ENCODE measurements at regions of chr9 and their contacts with region 1.

Region 1: GRCh38 chr9:98074115-98074990 is 17.8 kb downstream of the NANS start:
- DNase-seq: peak; percentile 48 to 82 (median 65)
- ATAC-seq: no peak
- H3K4me3 ChIP-seq: no peak overlapping the region
- H3K4me3 Mint-ChIP-seq: peak overlapping the region; percentile 69
- H3K27ac ChIP-seq: peak overlapping the region; percentile 73 to 83
- H3K27ac Mint-ChIP-seq: peak overlapping the region; percentile 94
- H3K4me1 ChIP-seq: peaks cover 28% of the 10 kb centered on the region
- H3K4me1 Mint-ChIP-seq: peaks cover 51% of the 10 kb centered on the region
- H3K27me3 ChIP-seq: no peaks in the 10 kb centered on the region
- H3K27me3 Mint-ChIP-seq: no peaks in the 10 kb centered on the region
- CTCF ChIP-seq: peak; percentile 99

Region 2: DNA sequence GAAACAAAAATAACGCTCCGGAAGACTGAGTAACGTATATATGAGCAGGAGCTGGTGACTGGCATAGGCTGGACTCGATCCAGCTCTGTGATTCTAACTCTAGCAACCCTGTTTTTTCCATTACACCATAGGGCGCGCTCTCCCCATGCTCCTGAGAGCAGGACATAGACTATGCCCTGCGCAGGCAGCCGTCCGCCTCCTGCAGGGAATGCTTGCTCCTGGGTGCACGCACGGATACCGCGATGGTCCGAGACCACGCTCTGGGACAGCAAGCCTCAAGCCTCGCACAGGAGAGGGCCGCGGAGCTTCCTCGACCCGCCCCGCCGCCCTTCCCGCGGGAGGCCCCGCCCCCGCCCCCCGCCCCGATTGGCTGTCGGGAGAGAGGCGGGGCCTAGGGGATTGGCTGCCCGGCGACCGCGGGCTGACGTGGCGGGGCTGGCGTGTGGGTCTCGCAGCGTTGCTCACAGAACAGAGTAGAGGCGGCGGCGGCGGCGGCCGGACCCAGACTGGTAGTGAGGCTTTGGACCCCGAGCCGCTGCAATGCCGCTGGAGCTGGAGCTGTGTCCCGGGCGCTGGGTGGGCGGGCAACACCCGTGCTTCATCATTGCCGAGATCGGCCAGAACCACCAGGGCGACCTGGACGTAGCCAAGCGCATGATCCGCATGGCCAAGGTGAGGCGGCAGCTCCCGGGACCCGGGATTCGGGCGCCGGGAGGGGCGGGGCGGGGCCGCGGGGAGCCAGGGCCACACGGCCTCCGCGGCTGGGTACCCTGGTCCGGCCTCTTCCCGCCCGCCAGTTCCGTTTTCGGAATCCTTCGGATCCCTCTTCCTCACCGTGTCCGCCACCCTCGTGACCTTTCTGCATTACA is 17.9 kb before region 1 on chr9 and contains the start of gene NANS:
- CTCF ChIA-PET with region 1: interaction called, 7 read pairs
- POLR2A ChIA-PET with region 1: interaction called, 6 read pairs
- intact Hi-C with region 1: loop called in 1 of 2 experiments (anchors 1 kb)
- DNase-seq: peak; percentile 81 to 95 (median 88)
- ATAC-seq: peak; percentile 92
- H3K4me3 ChIP-seq: peak within 1 kb of the TSS; percentile 71
- H3K4me3 Mint-ChIP-seq: peak within 1 kb of the TSS; percentile 98
- H3K27ac ChIP-seq: peak within 1 kb of the TSS; percentile 64 to 75
- H3K27ac Mint-ChIP-seq: peak within 1 kb of the TSS; percentile 93
- H3K4me1 ChIP-seq: peaks cover 27% of the 10 kb centered on the region
- H3K4me1 Mint-ChIP-seq: peaks cover 28% of the 10 kb centered on the region
- H3K27me3 ChIP-seq: no peaks in the 10 kb centered on the region
- H3K27me3 Mint-ChIP-seq: no peaks in the 10 kb centered on the region
- CTCF ChIP-seq: no peak
- total RNA-seq, gene NANS: 70.5 to 74.0 TPM

Region 3: DNA sequence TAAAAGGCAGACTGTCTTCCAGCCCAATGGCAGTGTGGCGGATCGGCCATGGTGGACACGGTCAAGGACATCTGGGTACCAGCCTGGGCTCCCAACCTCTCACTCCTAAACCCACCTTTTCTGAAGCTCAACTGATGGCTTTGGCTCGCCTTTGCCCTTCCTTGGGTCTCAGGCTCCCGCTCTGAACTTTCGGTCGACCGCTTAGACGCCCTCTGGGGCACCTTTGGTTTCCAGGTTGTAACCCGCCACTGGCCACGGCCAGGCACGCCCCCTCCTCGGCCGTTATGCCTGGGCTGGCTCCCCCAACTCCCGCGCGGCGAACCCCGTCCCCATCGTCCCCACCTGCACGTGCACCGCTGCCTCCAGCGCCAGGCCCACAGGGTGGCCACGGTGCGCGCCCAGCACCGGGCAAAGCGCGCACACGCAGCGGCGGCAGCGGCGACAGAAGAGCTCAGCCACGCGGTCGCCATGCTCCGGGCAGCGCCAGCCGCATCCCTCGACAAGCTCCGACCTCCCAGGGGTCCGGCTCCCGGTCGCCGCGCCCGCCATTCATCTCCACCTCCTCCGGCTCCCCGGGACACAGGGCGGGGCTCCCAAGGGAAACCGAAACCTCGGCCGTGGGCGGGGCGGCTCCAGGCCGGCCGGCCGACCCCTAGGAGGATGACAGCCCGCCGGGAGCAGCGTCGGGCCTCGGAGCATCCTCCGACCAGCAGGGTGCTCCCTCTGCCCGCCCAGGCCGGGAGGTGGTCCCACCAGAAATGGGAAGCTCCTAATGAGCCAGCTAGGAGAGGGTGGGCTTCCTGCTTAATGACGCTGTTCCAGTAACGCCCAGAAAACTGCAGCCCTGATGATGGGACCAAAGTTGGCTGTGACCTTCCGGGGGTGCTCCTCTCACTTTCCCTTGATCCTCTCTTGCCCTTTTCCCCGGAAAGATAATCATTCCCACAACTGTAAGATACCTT is 44.6 kb after region 1 on chr9 and contains the start of gene TRIM14:
- CTCF ChIA-PET with region 1: interaction called, 5 read pairs
- POLR2A ChIA-PET with region 1: interaction called, 7 read pairs
- intact Hi-C with region 1: loop called (anchors 1 to 2 kb)
- DNase-seq: peak in 12 of 14 experiments; percentile 28 to 74 (median 46)
- ATAC-seq: peak; percentile 38
- H3K4me3 ChIP-seq: peak within 1 kb of the TSS; percentile 89
- H3K4me3 Mint-ChIP-seq: peak within 1 kb of the TSS; percentile 90
- H3K27ac ChIP-seq: peak within 1 kb of the TSS; percentile 79 to 84
- H3K27ac Mint-ChIP-seq: peak within 1 kb of the TSS; percentile 95
- H3K4me1 ChIP-seq: peaks cover 66% of the 10 kb centered on the region
- H3K4me1 Mint-ChIP-seq: peaks cover 65% of the 10 kb centered on the region
- H3K27me3 ChIP-seq: no peaks in the 10 kb centered on the region
- H3K27me3 Mint-ChIP-seq: no peaks in the 10 kb centered on the region
- CTCF ChIP-seq: no peak
- total RNA-seq, gene TRIM14: 23.5 to 23.6 TPM

Region 4: DNA sequence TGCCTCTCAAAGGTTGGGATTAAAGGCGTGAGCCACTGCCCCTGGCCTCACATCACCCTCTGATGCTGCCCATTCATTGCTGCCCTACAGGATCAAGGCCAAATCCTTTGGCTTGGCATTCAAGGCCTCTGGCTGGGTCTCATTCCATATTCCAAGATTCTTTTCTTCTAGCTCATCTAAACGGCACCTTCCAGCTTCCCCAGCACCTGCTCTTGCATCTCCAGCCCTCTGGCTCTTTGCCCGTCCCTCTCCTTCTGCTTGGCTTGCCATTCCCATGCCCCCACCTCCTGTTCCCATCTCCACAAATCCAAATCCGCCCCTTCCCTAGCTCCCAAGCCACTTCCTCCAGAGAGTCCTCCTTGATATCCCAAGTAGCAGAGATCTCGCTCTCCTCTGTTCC is 84.9 kb after region 1 on chr9:
- CTCF ChIA-PET with region 1: no interaction called
- POLR2A ChIA-PET with region 1: no interaction called
- intact Hi-C with region 1: no loop called
- DNase-seq: no peak
- ATAC-seq: no peak
- H3K4me3 ChIP-seq: no peak overlapping the region
- H3K4me3 Mint-ChIP-seq: no peak overlapping the region
- H3K27ac ChIP-seq: no peak overlapping the region
- H3K27ac Mint-ChIP-seq: no peak overlapping the region
- H3K4me1 ChIP-seq: peaks cover 14% of the 10 kb centered on the region
- H3K4me1 Mint-ChIP-seq: peaks cover 32% of the 10 kb centered on the region
- H3K27me3 ChIP-seq: no peaks in the 10 kb centered on the region
- H3K27me3 Mint-ChIP-seq: no peaks in the 10 kb centered on the region
- CTCF ChIP-seq: no peak

Region 5: GRCh38 chr9:98204692-98205091 is 130.3 kb after region 1 on chr9:
- CTCF ChIA-PET with region 1: interaction called, 3 read pairs
- POLR2A ChIA-PET with region 1: interaction called, 3 read pairs
- intact Hi-C with region 1: loop called (anchors 1 to 2 kb)
- DNase-seq: no peak
- ATAC-seq: no peak
- H3K4me3 ChIP-seq: no peak overlapping the region
- H3K4me3 Mint-ChIP-seq: no peak overlapping the region
- H3K27ac ChIP-seq: no peak overlapping the region
- H3K27ac Mint-ChIP-seq: no peak overlapping the region
- H3K4me1 ChIP-seq: peaks cover 8% of the 10 kb centered on the region
- H3K4me1 Mint-ChIP-seq: peaks cover 6% of the 10 kb centered on the region
- H3K27me3 ChIP-seq: no peaks in the 10 kb centered on the region
- H3K27me3 Mint-ChIP-seq: no peaks in the 10 kb centered on the region
- CTCF ChIP-seq: no peak

Region 6: GRCh38 chr9:98438666-98439065 is 364.3 kb after region 1 on chr9:
- CTCF ChIA-PET with region 1: no interaction called
- POLR2A ChIA-PET with region 1: no interaction called
- intact Hi-C with region 1: no loop called
- DNase-seq: no peak
- ATAC-seq: no peak
- H3K4me3 ChIP-seq: no peak overlapping the region
- H3K4me3 Mint-ChIP-seq: no peak overlapping the region
- H3K27ac ChIP-seq: no peak overlapping the region
- H3K27ac Mint-ChIP-seq: no peak overlapping the region
- H3K4me1 ChIP-seq: no peaks in the 10 kb centered on the region
- H3K4me1 Mint-ChIP-seq: no peaks in the 10 kb centered on the region
- H3K27me3 ChIP-seq: no peaks in the 10 kb centered on the region
- H3K27me3 Mint-ChIP-seq: no peaks in the 10 kb centered on the region
- CTCF ChIP-seq: no peak

Region 7: DNA sequence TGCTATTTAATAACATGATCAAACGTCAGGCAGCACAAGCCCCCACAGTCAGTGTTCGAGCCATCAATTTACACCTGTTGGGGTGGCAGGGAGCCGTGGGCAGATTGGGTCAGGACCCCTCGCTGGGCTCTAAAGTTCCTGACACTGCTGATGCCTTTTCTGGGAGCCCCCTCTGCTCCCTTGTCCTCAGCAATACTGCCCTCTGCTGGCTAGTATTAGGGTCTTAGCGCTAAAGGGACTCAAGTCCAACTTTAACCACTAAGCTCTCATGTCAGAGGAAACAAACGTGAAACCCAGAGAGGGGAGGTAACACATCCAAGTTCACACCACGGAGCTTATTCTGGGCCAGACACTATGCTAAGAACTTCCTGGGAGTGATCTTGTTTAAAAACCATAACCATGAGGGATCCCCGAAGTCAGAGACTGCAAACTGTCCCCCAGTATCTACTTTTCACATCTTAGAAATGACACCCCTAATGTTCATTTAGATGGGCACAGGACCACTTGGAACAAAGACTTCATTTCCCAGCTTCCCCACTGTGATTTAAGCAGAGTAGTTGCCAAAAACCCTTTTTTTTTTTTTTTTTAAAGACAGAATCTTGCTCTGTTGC is 701.6 kb after region 1 on chr9:
- CTCF ChIA-PET with region 1: no interaction called
- POLR2A ChIA-PET with region 1: no interaction called
- intact Hi-C with region 1: loop called in 1 of 2 experiments (anchors 5 kb)
- DNase-seq: peak in 5 of 14 experiments; percentile 8 to 63 (median 40)
- ATAC-seq: peak; percentile 34
- H3K4me3 ChIP-seq: no peak overlapping the region
- H3K4me3 Mint-ChIP-seq: no peak overlapping the region
- H3K27ac ChIP-seq: no peak overlapping the region
- H3K27ac Mint-ChIP-seq: no peak overlapping the region
- H3K4me1 ChIP-seq: no peaks in the 10 kb centered on the region
- H3K4me1 Mint-ChIP-seq: no peaks in the 10 kb centered on the region
- H3K27me3 ChIP-seq: no peaks in the 10 kb centered on the region
- H3K27me3 Mint-ChIP-seq: no peaks in the 10 kb centered on the region
- CTCF ChIP-seq: peak; percentile 33